ENCODE measurements at regions of chr4 and their contacts with region 1.

Region 1: GRCh38 chr4:6250235-6250983 is 19.2 kb upstream of the WFS1 start:
- DNase-seq: no peak
- H3K4me3 Mint-ChIP-seq: no peak overlapping the region
- H3K27ac Mint-ChIP-seq: no peak overlapping the region
- H3K4me1 Mint-ChIP-seq: no peaks in the 10 kb centered on the region
- H3K27me3 Mint-ChIP-seq: peaks cover 56% of the 10 kb centered on the region

Region 2: DNA sequence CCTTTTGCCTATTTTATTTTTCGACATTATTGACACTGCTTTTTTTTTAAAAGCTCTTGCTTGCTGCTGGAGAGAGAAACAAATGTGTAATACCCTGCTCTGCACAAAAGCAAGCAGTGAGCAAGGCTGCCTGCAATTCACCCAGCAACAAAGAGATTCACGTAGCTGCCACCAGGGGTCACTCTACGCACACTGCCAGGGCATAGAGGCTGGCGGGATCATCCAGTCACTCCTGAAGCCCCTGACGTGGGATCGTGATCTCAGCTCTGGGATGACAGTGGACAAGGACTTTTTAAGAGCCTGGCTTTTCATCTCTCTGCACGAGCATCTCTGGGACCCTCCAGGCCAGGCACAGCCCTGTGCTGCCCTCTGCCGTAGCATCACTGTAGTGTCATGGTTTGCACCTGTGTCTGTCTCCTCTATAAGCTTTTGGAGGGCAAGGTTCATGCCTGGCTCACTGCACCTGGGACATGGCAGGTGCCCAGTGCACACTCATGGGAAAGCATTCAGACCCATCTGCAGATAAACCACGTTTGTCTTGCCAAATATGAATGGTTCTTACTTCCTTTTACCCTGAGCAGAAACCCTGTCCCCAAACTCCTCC is 252.0 kb before region 1 on chr4:
- CTCF ChIA-PET with region 1: interaction called, 19 read pairs
- DNase-seq: peak; percentile 60
- H3K4me3 Mint-ChIP-seq: no peak overlapping the region
- H3K27ac Mint-ChIP-seq: no peak overlapping the region
- H3K4me1 Mint-ChIP-seq: no peaks in the 10 kb centered on the region
- H3K27me3 Mint-ChIP-seq: peaks cover 10% of the 10 kb centered on the region

Region 3: GRCh38 chr4:6134612-6135220 is 115.7 kb before region 1 on chr4:
- CTCF ChIA-PET with region 1: interaction called, 20 read pairs
- DNase-seq: peak; percentile 61
- H3K4me3 Mint-ChIP-seq: no peak overlapping the region
- H3K27ac Mint-ChIP-seq: no peak overlapping the region
- H3K4me1 Mint-ChIP-seq: peaks cover 7% of the 10 kb centered on the region
- H3K27me3 Mint-ChIP-seq: peaks cover 5% of the 10 kb centered on the region

Region 4: DNA sequence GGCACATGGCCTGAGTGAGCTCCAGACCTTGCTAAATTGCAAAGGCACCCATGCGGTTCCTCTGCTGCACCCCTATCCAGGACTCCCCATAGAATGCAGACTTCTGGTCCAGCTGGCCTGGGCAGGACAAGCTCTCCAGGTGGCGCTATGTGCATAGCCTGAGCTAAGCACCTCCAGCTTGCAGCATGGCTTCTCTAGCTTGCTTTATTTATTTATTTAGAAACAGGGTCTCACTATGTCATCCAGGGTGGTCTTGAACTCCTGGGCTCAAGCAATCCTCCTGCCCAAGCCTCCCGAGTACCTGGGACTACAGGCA is 13.8 kb after region 1 on chr4:
- CTCF ChIA-PET with region 1: interaction called, 40 read pairs
- DNase-seq: peak; percentile 50
- H3K4me3 Mint-ChIP-seq: no peak overlapping the region
- H3K27ac Mint-ChIP-seq: no peak overlapping the region
- H3K4me1 Mint-ChIP-seq: peaks cover 15% of the 10 kb centered on the region
- H3K27me3 Mint-ChIP-seq: peaks cover 62% of the 10 kb centered on the region